Aorta (tissue), 5 donors: ENCODE measurements at regions of chr1 and their contacts with region 1.

Region 1: DNA sequence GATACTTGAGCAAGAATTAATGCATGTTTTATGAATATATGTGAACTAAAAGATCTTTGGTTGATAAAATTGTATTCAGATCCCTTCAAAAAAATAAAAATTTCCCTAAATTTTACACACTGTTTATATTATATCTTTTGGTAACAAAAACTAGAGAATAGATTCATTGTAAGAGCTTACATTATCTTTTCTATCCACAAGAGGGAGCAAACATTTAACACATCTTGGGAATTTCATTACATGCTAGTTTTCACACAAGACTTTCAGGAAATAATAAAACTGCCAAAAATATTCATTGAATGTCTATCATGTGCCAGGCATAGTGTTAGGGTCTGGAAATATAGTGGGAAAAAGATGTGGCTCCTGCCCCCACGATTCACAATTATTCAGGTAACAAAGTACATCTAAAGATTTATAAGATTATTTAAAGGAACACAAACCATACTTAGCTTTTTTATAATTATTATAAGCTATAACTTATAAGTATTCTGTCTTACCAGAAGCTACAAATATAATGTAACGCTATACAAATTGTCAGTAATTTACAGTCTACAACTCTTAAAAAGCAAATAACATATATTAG is 30.6 kb downstream of the FAF1 start:
- DNase-seq: no peak
- ATAC-seq: no peak
- H3K4me3 ChIP-seq: no peak overlapping the region
- H3K27ac ChIP-seq: no peak overlapping the region
- H3K4me1 ChIP-seq: no peaks in the 10 kb centered on the region
- H3K27me3 ChIP-seq: no peaks in the 10 kb centered on the region

Region 2: GRCh38 chr1:51044834-51045233 is 115.4 kb after region 1 on chr1:
- intact Hi-C with region 1: loop called in 1 of 2 experiments (anchors 10 kb)
- DNase-seq: no peak
- ATAC-seq: no peak
- H3K4me3 ChIP-seq: no peak overlapping the region
- H3K27ac ChIP-seq: no peak overlapping the region
- H3K4me1 ChIP-seq: no peaks in the 10 kb centered on the region
- H3K27me3 ChIP-seq: no peaks in the 10 kb centered on the region